Sciatic nerve (tissue), 2 donors: ENCODE measurements at regions of chr1 and their contacts with region 1.

Region 1: DNA sequence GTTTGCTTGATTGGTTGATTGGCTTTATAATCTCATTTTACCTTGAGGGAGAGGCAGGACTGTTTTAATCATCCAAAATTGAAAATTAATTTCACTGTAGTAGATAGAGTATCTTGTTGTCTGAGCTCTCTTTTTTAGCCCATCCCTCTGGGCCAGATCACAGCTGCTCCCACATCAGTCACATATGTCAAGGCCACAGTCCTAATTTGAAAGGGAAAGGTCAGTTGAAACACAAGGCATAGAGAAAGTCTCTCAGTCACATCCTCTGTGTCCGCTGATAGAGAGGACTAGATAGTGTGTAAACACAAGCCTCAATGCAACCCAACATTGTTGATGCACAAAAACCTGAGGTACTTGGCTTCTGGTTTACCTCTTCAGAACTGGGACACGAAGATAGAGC is 6.8 kb downstream of the C1orf74 start:
- DNase-seq: no peak
- ATAC-seq: no peak

Region 2: GRCh38 chr1:209743145-209743482 is 34.5 kb before region 1 on chr1:
- intact Hi-C with region 1: no loop called
- DNase-seq: peak; percentile 80
- ATAC-seq: peak; percentile 82

Region 3: DNA sequence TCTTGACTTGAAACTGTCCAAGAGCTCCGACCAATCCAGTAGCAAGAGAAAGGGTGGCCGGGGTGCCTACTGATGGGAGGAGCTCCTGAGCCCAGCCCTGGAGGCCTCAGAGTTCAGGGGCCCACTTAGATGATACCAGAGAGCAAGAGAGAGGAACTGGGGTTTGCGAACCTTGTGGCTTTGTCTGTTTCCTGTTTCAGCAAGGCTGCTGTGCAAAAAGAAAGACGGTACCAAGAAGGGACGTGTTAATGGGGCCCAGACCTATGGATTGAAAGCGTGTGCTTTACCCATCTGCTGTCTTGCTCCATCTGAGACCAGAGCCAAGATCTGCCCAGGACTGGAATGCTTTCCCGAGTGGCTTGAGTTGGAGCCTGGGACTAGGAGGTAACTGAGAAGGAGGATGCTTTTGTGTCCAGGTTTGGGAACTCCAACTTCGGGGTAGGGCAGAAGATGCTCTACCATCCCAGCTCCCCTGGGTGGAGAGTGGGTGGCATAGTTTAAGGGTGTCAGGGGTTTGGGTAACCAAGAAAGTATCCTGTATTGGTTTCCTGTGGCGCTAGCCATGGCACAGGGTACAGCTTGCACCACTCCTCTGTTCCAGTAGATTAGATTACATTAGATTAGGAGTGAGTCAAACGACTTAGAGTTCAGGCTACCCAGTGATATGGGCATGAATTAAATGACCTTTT is 21.5 kb before region 1 on chr1 and contains the start of gene TRAF3IP3:
- intact Hi-C with region 1: loop called (anchors 1 kb)
- DNase-seq: no peak
- ATAC-seq: peak; percentile 79
- total RNA-seq, gene TRAF3IP3: 8.3 TPM